ENCODE measurements at regions of chr17 and their contacts with region 1.

Region 1: GRCh38 chr17:82648166-82648668 is at the start of gene WDR45B:
- DNase-seq: peak; percentile 96
- total RNA-seq, gene WDR45B: 45.4 TPM

Region 2: DNA sequence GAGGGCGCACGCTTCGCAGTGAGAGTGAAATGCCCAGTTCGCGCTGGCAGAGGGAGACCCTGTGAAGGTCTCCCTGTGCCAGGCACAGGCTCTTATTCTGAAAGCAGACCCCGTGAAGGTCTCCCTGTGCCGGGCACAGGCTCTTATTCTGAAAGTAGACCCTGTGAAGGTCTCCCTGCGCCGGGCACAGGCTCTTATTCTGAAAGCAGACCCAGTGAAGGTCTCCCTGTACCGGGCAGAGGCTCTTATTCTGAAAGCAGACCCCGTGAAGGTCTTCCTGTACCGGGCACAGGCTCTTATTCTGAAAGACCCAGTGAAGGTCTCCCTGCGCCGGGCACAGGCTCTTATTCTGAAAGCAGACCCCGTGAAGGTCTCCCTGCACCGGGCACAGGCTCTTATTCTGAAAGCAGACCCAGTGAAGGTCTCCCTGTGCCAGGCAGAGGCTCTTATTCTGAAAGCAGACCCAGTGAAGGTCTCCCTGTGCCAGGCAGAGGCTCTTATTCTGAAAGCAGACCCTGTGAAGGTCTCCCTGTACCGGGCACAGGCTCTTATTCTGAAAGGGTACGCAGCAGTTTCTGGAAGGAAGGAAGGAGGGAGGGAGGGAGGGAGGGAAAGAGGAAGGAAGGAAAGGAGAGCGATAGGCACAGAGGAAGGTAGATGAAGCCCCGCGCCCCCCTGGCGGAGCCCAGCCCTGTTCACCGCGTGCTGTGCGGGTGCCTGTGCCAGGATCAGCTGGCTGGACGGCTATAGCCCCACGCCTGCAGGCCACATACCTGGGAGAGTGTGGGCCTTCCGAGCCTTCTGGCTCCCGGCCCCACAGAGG is 55.2 kb before region 1 on chr17:
- intact Hi-C with region 1: loop called (anchors 5 kb)
- DNase-seq: peak; percentile 84

Region 3: GRCh38 chr17:82668631-82669099 is 20.4 kb after region 1 on chr17:
- intact Hi-C with region 1: loop called (anchors 2 kb)
- DNase-seq: no peak

Region 4: GRCh38 chr17:82716203-82717010 is 68.2 kb after region 1 on chr17 and contains the start of gene FN3KRP:
- intact Hi-C with region 1: loop called (anchors 5 kb)
- DNase-seq: peak; percentile 97
- total RNA-seq, gene FN3KRP: 16.2 TPM

Region 5: GRCh38 chr17:82740906-82741759 is 92.9 kb after region 1 on chr17:
- intact Hi-C with region 1: no loop called
- DNase-seq: no peak

Region 6: GRCh38 chr17:82751571-82752370 is 103.6 kb after region 1 on chr17 and contains the start of gene TBCD:
- intact Hi-C with region 1: loop called (anchors 5 kb)
- DNase-seq: peak; percentile 92
- total RNA-seq, gene TBCD: 67.3 TPM